ENCODE measurements at regions of chr17 and their contacts with region 1.

Region 1: DNA sequence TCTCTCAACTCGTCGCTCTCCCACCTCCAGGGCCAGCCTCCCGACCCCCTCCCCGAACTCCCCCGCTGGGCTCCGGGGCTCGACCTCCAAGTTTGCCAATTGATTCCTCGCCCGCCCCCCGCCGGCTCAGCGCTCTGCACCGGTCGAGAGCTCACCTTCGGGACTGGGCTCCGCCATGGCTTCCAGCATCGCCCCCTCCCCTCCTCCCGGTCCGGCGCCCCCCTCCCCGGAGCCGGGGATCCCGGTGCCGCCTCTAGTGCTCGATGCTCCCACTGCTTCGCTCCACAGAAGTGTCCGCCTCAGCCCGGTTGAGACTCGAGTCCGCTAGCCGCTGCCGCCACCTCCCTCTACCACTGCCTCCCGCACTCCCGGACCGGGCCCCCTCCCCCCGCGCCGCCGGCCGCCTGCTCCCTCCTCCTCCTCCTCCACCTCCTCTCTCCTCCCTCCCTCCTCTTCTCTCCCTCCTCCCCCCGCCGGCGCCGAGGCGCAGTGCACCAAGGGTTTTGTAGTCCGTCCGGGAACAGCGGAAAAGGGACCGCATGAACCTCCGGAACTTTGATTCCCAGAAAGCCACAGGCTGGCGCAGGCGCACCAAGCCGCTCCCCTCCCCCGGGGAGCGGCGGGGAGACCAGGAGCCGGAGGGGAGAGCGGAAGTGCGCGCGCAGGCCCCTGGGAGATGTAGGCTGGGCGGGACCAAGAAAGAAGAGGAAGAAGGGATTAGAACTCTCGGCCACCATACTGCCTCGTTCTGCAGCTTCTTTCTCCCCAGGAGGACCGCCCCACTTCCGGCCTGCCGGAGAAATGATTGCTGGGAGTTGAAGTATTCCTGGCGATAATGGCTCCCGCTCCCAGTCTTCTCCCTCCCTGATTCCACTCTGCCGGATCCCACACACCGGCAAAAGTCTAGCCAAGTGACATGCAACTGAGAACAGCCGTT is at the start of gene PHF23:
- DNase-seq: peak; percentile 100
- ATAC-seq: peak; percentile 54 to 79
- H3K4me3 ChIP-seq: peak within 1 kb of the TSS; percentile 99
- H3K27ac ChIP-seq: peak within 1 kb of the TSS; percentile 98 to 100
- H3K4me1 ChIP-seq: peaks cover 52% of the 10 kb centered on the region
- CTCF ChIP-seq: no peak
- EP300 ChIP-seq: no peak
- POLR2A ChIP-seq: peak; percentile 70
- RAD21 ChIP-seq: no peak
- polyA plus RNA-seq, gene PHF23: 52.1 and 61.2 TPM in 2 replicates

Region 2: DNA sequence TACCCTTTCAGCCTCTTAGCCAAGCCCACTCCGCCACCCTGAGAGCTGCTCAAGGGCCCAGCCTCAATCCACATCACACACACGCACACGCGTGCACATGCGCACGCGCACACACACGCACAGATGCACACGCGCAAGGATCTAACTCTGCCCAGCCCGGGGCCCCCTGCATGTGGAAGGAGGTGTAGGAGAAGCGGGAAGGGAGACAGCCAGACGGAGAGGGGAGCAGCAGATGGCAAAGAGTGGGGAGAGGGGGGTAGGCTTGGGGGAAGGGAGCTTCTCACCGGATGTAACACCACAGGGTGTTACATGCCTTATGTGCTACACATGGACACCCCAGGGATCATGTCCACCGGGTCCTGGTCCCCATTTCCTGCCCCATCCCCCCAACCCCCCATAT is 35.0 kb before region 1 on chr17:
- CTCF ChIA-PET with region 1: no interaction called
- POLR2A ChIA-PET with region 1: no interaction called
- DNase-seq: no peak
- ATAC-seq: peak; percentile 10 to 15; a peak in 5 of 6 replicates
- H3K4me3 ChIP-seq: peak overlapping the region; percentile 52
- H3K27ac ChIP-seq: peak overlapping the region; percentile 82 to 85
- H3K4me1 ChIP-seq: peaks cover 12% of the 10 kb centered on the region
- CTCF ChIP-seq: no peak
- EP300 ChIP-seq: no peak
- POLR2A ChIP-seq: no peak
- RAD21 ChIP-seq: no peak

Region 3: DNA sequence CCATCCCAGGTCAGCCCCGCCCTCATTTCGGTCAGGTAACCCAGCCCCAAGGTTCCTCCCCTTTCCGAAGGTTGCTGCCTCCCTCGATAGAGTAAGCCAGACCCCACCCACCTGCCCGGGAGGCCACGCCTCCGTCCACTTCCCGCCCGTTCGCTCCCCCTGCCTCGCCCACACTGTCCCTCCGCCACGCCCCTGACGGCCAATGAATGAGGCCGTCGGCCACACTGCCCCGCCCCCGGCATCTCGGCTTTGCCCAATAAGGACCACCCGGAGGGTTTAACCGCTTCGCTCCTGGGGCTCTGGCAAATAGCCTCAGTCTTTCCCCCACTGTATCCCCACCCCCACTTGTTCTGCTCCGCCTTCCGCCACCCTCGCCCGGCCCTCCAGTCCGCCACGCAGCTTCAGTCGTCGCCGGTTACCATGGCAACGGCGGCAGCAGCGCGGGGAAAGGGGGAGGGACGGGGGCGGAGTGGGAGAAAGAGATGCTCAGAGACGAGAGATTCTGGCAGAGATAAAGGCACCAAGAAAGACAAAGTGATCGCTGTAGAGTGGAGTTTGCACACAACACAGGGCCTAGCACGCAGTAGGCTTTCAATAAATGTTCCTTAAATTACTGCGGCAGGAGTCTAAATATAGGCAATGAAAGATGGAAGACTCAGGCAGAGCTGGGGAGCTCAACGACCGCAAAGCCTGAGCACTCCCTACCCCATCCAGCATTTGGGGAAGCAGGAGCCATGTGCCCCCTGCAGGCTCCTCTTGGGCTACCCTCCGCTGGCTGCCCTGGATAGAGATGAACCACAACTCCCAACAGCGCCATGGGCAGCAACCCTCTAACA is 24.8 kb before region 1 on chr17:
- CTCF ChIA-PET with region 1: interaction called, 169 read pairs
- POLR2A ChIA-PET with region 1: interaction called, 63 read pairs
- DNase-seq: peak; percentile 99 to 100
- ATAC-seq: peak; percentile 75 to 89
- H3K4me3 ChIP-seq: peak overlapping the region; percentile 47
- H3K27ac ChIP-seq: peak overlapping the region; percentile 61 to 79
- H3K4me1 ChIP-seq: peaks cover 43% of the 10 kb centered on the region
- CTCF ChIP-seq: peak; percentile 53
- EP300 ChIP-seq: no peak
- POLR2A ChIP-seq: no peak
- RAD21 ChIP-seq: peak; percentile 34 to 42; a peak in 2 of 5 replicates

Region 4: DNA sequence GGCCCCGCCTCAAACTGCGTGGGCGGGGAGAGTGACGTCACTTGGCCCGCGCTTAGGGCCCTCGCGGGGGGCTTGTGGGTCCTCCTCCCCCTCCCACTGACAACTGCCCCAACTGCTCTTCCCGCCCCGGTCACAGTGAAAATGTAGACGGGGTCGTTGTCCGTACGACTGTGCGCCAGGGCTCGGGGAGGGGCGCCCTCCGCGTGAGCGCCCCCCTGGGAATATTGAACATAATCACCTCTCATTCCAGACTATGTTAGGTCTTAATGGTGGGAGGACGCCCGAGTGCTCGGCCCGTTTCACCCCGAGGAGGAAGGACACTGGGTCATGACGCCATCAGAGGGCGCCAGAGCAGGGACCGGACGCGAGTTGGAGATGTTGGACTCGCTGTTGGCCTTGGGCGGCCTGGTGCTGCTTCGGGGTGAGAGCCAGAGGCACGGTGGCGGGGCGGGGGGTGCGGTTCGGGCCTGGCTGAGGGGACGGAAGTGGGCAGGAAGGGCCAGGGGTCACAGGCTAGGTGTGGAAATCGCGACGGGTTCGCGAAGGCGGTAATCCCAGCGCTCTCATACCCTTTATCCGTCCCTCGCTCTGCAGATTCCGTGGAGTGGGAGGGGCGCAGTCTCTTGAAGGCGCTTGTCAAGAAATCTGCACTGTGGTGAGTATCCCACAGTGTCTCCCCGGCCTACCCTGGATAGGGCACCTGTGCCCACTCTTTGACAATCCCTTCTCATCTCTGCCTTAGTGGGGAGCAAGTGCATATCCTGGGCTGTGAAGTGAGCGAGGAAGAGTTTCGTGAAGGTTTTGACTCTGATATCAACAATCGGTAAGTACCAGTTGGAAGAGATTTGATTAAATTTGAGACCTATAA is 13.1 kb after region 1 on chr17 and contains the start of gene ELP5:
- CTCF ChIA-PET with region 1: interaction called, 7 read pairs
- POLR2A ChIA-PET with region 1: interaction called, 15 read pairs
- DNase-seq: peak; percentile 97 to 98
- ATAC-seq: peak; percentile 85 to 86
- H3K4me3 ChIP-seq: peak within 1 kb of the TSS; percentile 99
- H3K27ac ChIP-seq: peak within 1 kb of the TSS; percentile 96 to 99
- H3K4me1 ChIP-seq: peaks cover 28% of the 10 kb centered on the region
- CTCF ChIP-seq: peak; percentile 54
- EP300 ChIP-seq: no peak
- POLR2A ChIP-seq: peak; percentile 90
- RAD21 ChIP-seq: peak; percentile 31 to 56; a peak in 4 of 5 replicates
- polyA plus RNA-seq, gene ELP5: 114 and 133 TPM in 2 replicates

Measured in A549 (cell line).